ENCODE measurements at regions of chr12 and their contacts with region 1.

Region 1: GRCh38 chr12:3777206-3777809 is 24.4 kb upstream of the CRACR2A start:
- DNase-seq: peak; percentile 35
- H3K4me3 ChIP-seq: no peak overlapping the region
- H3K27ac ChIP-seq: no peak overlapping the region
- H3K4me1 ChIP-seq: no peaks in the 10 kb centered on the region
- H3K27me3 ChIP-seq: no peaks in the 10 kb centered on the region
- CTCF ChIP-seq: peak; percentile 77 to 83

Region 2: DNA sequence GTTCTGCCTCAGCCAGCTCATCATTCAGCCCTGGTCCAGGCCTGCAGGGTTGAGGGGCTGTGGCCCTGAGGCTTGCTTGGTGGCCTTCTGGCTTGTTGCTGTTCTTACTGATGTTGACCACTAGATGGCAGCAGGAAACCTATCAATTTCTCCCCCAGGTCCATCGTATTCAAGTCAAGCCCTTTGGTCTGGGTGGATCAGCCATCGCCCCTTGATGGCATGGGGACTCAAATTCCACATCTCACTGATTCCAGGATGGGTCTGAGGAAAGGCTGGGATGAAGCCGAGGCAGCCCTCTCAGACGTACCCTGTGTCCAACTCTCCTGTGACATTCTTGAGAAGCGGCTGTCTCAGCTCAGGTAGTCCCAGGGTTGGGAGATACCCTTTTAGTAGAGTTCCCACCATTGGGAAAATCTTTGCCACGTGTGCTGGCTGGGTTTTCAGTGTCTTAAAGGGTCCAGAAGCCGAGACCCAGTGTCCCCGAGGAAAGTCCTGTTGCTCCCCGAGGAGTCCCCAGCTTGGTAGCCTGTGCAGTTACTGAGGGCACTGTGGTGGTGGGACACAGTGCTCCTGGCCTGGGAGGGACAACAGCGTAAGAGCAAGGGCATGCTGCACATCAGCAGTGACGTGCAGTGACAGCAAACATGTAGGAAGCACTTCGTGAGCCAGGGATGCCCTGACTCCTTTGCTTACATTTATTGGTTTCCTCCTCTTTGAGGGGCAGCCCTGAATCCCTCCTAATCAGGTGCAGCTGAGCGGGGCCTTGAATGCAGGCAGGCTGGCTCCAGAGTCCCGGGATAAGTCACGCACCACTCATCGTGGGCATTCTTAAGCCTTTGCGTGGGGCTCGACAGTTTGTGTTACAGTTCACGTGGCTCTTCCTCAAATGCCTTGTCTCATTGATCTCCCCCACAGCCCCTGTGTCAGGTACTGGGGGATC is 641.5 kb before region 1 on chr12:
- CTCF ChIA-PET with region 1: no interaction called
- dilution Hi-C with region 1: no loop called
- in situ Hi-C with region 1: no loop called
- intact Hi-C with region 1: loop called (anchors 10 kb)
- DNase-seq: peak; percentile 51
- H3K4me3 ChIP-seq: no peak overlapping the region
- H3K27ac ChIP-seq: no peak overlapping the region
- H3K4me1 ChIP-seq: peaks cover 2% of the 10 kb centered on the region
- H3K27me3 ChIP-seq: no peaks in the 10 kb centered on the region
- CTCF ChIP-seq: peak; percentile 66 to 79

Region 3: DNA sequence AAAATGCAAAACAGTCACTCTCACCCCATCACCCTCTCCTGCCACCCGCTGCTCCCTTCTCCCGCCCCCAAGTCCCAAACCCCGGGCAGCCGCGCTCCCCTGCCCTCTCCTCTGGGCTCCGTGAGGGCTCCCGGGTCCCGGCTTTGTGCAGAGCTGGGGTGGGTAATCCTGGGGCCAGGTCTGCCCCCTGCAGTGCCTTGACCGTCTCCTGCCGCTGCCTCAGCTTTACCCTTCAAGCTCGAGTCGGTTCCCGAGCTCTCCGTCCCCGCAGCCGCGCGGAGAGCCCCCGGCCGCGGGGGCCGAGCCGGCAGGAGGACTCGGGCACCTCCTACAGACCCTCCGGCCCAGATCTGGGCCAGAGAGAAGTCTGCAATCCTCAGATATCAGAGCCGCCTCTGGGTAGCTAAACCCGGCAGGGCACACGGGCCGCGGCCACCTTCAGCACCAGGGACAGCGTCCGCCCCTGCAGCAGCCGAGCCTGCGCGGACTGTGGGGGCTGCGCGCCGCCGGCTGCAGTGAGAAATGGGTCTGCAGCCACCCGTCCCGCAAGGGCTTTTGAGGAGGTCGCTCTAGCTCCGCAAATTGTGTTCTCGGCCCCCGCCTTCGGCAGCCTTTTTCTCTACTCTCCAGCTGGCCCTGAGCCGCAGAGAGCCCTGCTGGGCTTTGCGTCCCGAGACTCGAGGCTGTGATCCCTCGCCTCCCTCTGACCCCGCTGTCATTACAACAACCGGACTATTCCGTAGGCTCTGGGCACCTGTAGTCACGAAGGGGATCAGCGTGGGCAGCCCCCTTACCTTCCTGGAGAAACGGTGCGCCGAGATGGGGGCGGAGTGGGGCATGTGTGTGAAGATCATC is 285.1 kb before region 1 on chr12:
- CTCF ChIA-PET with region 1: interaction called, 4 read pairs
- dilution Hi-C with region 1: no loop called
- in situ Hi-C with region 1: no loop called
- intact Hi-C with region 1: loop called (anchors 10 kb)
- DNase-seq: peak; percentile 66
- H3K4me3 ChIP-seq: peak overlapping the region; percentile 64 to 85 (median 77)
- H3K27ac ChIP-seq: peak overlapping the region; percentile 95
- H3K4me1 ChIP-seq: peaks cover 40% of the 10 kb centered on the region
- H3K27me3 ChIP-seq: no peaks in the 10 kb centered on the region
- CTCF ChIP-seq: peak in 1 of 2 donors; percentile 32

Region 4: DNA sequence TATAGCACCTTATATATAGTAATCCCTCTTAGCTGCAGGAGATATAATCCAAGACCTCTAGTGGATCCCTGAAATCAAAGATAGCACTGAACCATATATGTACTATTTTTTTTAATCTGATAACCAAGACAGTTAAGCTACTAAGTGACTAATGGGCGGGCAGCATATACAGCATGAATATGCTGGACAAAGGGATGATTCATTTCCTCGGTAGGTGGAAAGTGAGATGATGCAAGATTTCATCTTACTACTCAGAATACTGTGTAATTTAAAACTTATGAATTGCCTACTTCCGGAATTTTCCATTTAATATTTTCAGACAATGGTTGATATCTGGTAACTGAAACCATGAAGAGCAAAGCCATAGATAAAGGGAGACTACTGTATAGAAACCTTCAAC is 250.1 kb before region 1 on chr12:
- CTCF ChIA-PET with region 1: no interaction called
- dilution Hi-C with region 1: no loop called
- in situ Hi-C with region 1: loop called in 1 of 2 experiments (anchors 25 kb)
- intact Hi-C with region 1: loop called (anchors 10 kb)
- DNase-seq: peak; percentile 90
- H3K4me3 ChIP-seq: no peak overlapping the region
- H3K27ac ChIP-seq: peak overlapping the region; percentile 92
- H3K4me1 ChIP-seq: peaks cover 24% of the 10 kb centered on the region
- H3K27me3 ChIP-seq: no peaks in the 10 kb centered on the region
- CTCF ChIP-seq: no peak

Region 5: GRCh38 chr12:3533703-3534386 is 243.5 kb before region 1 on chr12:
- CTCF ChIA-PET with region 1: no interaction called
- dilution Hi-C with region 1: no loop called
- in situ Hi-C with region 1: loop called in 1 of 2 experiments (anchors 25 kb)
- intact Hi-C with region 1: loop called (anchors 10 kb)
- DNase-seq: no peak
- H3K4me3 ChIP-seq: no peak overlapping the region
- H3K27ac ChIP-seq: no peak overlapping the region
- H3K4me1 ChIP-seq: no peaks in the 10 kb centered on the region
- H3K27me3 ChIP-seq: no peaks in the 10 kb centered on the region
- CTCF ChIP-seq: no peak

Region 6: GRCh38 chr12:3559601-3560294 is 217.6 kb before region 1 on chr12:
- CTCF ChIA-PET with region 1: no interaction called
- dilution Hi-C with region 1: no loop called
- in situ Hi-C with region 1: no loop called
- intact Hi-C with region 1: loop called (anchors 10 kb)
- DNase-seq: no peak
- H3K4me3 ChIP-seq: no peak overlapping the region
- H3K27ac ChIP-seq: no peak overlapping the region
- H3K4me1 ChIP-seq: no peaks in the 10 kb centered on the region
- H3K27me3 ChIP-seq: no peaks in the 10 kb centered on the region
- CTCF ChIP-seq: no peak

Region 7: DNA sequence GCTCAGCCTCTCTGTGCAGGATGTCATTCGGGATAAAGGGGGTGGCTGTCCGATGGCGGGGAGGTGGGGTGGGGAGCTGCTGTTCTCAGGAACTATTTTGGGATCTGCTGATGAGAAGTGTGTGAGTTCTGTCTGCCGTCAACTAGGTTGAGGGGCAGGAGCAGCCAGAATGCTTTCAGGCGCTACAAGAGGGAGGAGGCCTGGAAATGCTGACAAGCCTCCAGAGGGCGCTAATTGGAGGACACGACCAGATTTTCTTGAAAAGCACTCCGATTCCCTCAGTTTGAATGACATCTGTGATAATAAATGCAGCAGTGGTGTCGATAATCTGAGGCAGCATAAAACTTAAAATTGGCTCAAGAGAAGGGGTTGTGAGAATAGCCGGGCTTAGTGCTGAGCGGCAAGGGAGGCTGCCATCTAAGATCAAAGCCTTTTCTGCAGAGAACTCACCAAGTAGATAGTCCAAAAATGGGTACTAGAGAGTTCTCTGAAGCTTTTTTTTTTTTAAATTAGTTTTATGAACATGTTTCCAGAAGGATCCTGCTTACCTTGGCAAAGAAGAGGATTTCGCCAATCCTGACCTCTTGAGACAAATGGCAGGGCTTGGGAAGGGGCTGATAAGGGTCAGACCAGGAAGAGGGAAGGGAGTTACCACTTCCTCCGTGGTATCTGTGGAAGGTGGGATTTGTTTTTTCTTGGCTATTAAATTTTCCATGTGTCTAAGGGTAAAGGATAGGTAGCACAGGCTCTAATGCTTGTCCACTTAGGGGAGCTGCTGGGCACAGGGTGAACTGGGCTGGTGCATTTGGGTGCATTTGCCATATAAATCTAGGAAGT is 118.8 kb before region 1 on chr12:
- CTCF ChIA-PET with region 1: no interaction called
- dilution Hi-C with region 1: no loop called
- in situ Hi-C with region 1: no loop called
- intact Hi-C with region 1: loop called (anchors 1 kb)
- DNase-seq: peak; percentile 6
- H3K4me3 ChIP-seq: no peak overlapping the region
- H3K27ac ChIP-seq: no peak overlapping the region
- H3K4me1 ChIP-seq: peaks cover 3% of the 10 kb centered on the region
- H3K27me3 ChIP-seq: peaks cover 10% of the 10 kb centered on the region
- CTCF ChIP-seq: peak; percentile 36 to 39

Measured in mammary epithelial cell (primary cell).